Natural killer cell (primary cell): ENCODE measurements at regions of chr6 and their contacts with region 1.

Region 1: GRCh38 chr6:26156076-26156849 is 69.0 kb downstream of the HFE start:
- DNase-seq: peak; percentile 92 to 93
- ATAC-seq: peak; percentile 48 to 72 (median 58)
- H3K4me3 ChIP-seq: peak overlapping the region; percentile 65
- H3K4me3 Mint-ChIP-seq: peak overlapping the region; percentile 99
- H3K27ac ChIP-seq: peak overlapping the region; percentile 87
- H3K27ac Mint-ChIP-seq: peak overlapping the region; percentile 92 to 97
- H3K4me1 ChIP-seq: peaks cover 29% of the 10 kb centered on the region
- H3K4me1 Mint-ChIP-seq: peaks cover 56% of the 10 kb centered on the region in 2 donors
- H3K27me3 ChIP-seq: no peaks in the 10 kb centered on the region
- H3K27me3 Mint-ChIP-seq: no peaks in the 10 kb centered on the region
- CTCF ChIP-seq: no peak

Region 2: DNA sequence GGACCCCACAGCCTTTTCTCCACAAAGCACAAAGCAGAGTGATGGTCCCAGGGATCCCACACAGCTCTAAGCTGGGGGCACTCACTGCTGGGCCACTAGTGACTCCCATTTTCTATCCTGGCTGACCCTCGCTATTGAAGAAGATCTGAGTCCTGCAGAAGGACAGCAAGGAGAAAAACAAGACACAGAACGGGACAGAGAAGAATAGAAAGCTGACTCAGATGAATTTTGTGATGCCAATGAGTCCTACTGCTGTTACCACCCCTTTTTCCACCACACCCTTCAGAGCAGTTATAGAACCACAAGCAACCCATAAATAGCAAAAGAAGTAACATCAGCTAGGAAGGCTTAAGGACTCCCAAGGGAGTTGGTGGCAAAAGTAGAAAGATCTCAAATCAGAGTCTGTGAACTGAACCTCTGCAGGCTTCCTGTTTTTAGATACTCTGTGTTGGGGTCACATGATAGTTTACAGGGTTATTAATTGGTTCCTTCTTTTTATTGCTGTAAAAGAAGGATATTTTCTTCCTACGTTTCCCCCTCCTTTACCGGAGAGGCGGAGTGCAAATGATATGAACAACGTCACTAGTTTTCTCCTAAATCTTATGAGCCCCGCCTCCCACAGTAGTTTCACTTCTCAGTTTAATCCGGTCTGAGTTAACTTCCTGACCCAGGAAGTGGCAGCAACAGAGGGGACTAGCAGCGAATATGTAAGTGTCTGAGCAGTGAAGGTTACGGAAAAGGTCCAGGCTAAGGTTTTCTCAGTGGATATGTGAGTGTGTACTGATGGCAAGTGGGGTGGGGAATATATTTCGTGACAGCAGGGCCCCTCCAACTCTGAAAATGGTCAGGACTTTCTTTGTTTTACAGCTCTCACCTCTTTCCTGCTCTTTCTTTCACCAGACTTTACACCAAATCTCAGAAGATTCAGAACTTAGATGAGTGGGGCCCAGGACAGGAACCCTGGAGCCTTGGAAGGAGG is 193.8 kb before region 1 on chr6 and contains the start of gene TRIM38:
- intact Hi-C with region 1: no loop called
- DNase-seq: peak; percentile 48 to 93
- ATAC-seq: peak; percentile 94 to 95 (median 94)
- H3K4me3 ChIP-seq: peak within 1 kb of the TSS; percentile 88
- H3K4me3 Mint-ChIP-seq: peak within 1 kb of the TSS; percentile 98
- H3K27ac ChIP-seq: peak within 1 kb of the TSS; percentile 97
- H3K27ac Mint-ChIP-seq: peak within 1 kb of the TSS; percentile 96 to 99
- H3K4me1 ChIP-seq: peaks cover 52% of the 10 kb centered on the region
- H3K4me1 Mint-ChIP-seq: peaks cover 68 to 71% of the 10 kb centered on the region in 2 donors
- H3K27me3 ChIP-seq: no peaks in the 10 kb centered on the region
- H3K27me3 Mint-ChIP-seq: no peaks in the 10 kb centered on the region
- CTCF ChIP-seq: no peak
- total RNA-seq, gene TRIM38: 25.5 to 30.5 (median 27.1) TPM

Region 3: GRCh38 chr6:26054857-26055669 is 101.2 kb before region 1 on chr6:
- intact Hi-C with region 1: loop called (anchors 2 kb)
- DNase-seq: peak; percentile 83 to 92
- ATAC-seq: peak; percentile 71 to 82 (median 71)
- H3K4me3 ChIP-seq: peak overlapping the region; percentile 78
- H3K4me3 Mint-ChIP-seq: peak overlapping the region; percentile 96
- H3K27ac ChIP-seq: peak overlapping the region; percentile 92
- H3K27ac Mint-ChIP-seq: peak overlapping the region; percentile 98 to 99
- H3K4me1 ChIP-seq: peaks cover 19% of the 10 kb centered on the region
- H3K4me1 Mint-ChIP-seq: peaks cover 29 to 35% of the 10 kb centered on the region in 2 donors
- H3K27me3 ChIP-seq: no peaks in the 10 kb centered on the region
- H3K27me3 Mint-ChIP-seq: no peaks in the 10 kb centered on the region
- CTCF ChIP-seq: no peak

Region 4: DNA sequence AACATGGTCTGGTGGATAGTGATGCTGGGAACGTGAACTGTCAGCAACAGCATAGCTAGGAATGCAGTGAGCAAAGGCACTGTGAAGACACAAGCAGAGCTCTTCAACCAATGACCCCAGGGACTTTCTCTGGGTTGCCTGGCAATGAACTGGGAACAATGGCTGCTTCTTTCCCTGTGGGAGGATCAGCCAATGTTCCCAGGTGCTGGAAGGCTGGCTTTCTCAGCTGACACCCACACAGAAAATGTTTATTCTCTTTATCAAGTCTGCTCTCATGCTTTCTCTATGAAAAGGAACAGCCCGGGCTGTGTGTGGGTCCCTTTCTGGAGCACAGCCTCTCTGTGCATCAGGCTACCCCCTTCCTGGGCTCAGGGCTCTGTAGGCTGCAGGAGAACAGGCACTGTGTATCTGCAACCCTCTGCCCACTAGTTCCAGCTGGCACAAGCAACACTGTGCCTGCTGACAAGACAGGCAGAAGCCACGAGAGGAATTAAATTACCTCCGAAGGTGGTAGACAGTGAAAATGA is 14.8 kb before region 1 on chr6:
- intact Hi-C with region 1: no loop called
- DNase-seq: no peak
- ATAC-seq: no peak
- H3K4me3 ChIP-seq: no peak overlapping the region
- H3K4me3 Mint-ChIP-seq: no peak overlapping the region
- H3K27ac ChIP-seq: no peak overlapping the region
- H3K27ac Mint-ChIP-seq: no peak overlapping the region
- H3K4me1 ChIP-seq: no peaks in the 10 kb centered on the region
- H3K4me1 Mint-ChIP-seq: no peaks in the 10 kb centered on the region
- H3K27me3 ChIP-seq: no peaks in the 10 kb centered on the region
- H3K27me3 Mint-ChIP-seq: no peaks in the 10 kb centered on the region
- CTCF ChIP-seq: no peak

Region 5: GRCh38 chr6:26175428-26176181 is 19.3 kb after region 1 on chr6:
- intact Hi-C with region 1: loop called (anchors 1 kb)
- DNase-seq: peak in 1 of 2 donors; percentile 87
- ATAC-seq: no peak
- H3K4me3 ChIP-seq: no peak overlapping the region
- H3K4me3 Mint-ChIP-seq: peak overlapping the region; percentile 78
- H3K27ac ChIP-seq: peak overlapping the region; percentile 6
- H3K27ac Mint-ChIP-seq: peak overlapping the region; percentile 77 to 83
- H3K4me1 ChIP-seq: peaks cover 17% of the 10 kb centered on the region
- H3K4me1 Mint-ChIP-seq: peaks cover 37 to 39% of the 10 kb centered on the region in 2 donors
- H3K27me3 ChIP-seq: no peaks in the 10 kb centered on the region
- H3K27me3 Mint-ChIP-seq: no peaks in the 10 kb centered on the region
- CTCF ChIP-seq: peak; percentile 86

Region 6: GRCh38 chr6:26216356-26216885 is 60.2 kb after region 1 on chr6:
- intact Hi-C with region 1: loop called (anchors 1 kb)
- DNase-seq: peak; percentile 68 to 94
- ATAC-seq: peak; percentile 77 to 92 (median 79)
- H3K4me3 ChIP-seq: peak overlapping the region; percentile 63
- H3K4me3 Mint-ChIP-seq: no peak overlapping the region
- H3K27ac ChIP-seq: peak overlapping the region; percentile 91
- H3K27ac Mint-ChIP-seq: no peak overlapping the region
- H3K4me1 ChIP-seq: peaks cover 27% of the 10 kb centered on the region
- H3K4me1 Mint-ChIP-seq: no peaks in the 10 kb centered on the region
- H3K27me3 ChIP-seq: no peaks in the 10 kb centered on the region
- H3K27me3 Mint-ChIP-seq: no peaks in the 10 kb centered on the region
- CTCF ChIP-seq: no peak

Region 7: DNA sequence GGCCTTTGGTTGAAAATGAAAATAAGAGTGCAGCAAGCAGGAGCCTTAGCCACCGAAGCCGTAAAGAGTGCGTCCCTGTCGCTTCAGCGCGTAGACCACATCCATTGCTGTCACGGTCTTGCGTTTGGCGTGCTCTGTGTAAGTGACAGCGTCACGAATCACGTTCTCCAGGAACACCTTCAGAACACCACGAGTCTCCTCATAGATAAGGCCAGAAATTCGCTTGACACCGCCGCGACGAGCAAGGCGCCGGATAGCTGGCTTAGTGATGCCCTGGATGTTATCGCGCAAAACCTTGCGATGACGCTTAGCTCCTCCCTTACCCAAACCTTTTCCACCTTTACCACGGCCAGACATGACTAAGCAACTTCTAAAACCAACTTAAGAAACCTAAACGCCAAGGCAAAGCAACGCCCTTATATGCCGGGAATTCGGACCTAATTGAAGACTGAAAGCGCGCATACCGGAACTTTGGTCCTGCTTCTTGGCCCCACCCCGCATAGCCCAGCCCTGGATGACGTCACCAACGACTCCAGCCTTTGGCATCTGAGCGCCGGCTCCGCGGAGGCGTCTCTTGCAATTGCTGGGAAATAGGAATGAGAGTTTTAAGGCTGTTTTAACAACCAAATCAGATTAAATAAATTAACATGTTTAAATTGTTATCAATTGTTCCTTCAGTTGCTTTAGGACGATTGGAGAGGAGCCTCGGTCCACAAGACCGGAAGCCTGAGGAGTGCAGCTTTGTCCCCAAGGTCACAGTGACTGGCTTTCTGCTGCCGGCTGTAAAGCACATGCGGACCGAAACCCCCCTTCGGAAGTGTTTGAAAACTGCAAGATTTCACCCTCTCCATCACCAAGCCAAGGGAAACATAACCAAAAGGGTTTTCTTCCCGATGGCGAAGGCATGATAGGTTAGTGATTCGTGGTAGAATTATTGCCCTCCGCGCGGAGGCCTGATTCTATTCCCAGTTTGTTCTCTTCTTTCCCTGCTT is 129.2 kb after region 1 on chr6:
- intact Hi-C with region 1: loop called (anchors 1 kb)
- DNase-seq: peak; percentile 83 to 98
- ATAC-seq: peak; percentile 76 to 93 (median 83)
- H3K4me3 ChIP-seq: peak overlapping the region; percentile 70
- H3K4me3 Mint-ChIP-seq: peak overlapping the region; percentile 95
- H3K27ac ChIP-seq: peak overlapping the region; percentile 97
- H3K27ac Mint-ChIP-seq: peak overlapping the region; percentile 98
- H3K4me1 ChIP-seq: peaks cover 17% of the 10 kb centered on the region
- H3K4me1 Mint-ChIP-seq: peaks cover 34 to 37% of the 10 kb centered on the region in 2 donors
- H3K27me3 ChIP-seq: no peaks in the 10 kb centered on the region
- H3K27me3 Mint-ChIP-seq: peaks cover 3 to 8% of the 10 kb centered on the region in 2 donors
- CTCF ChIP-seq: no peak

Region 8: GRCh38 chr6:27838058-27838944 is 1682.0 kb after region 1 on chr6:
- intact Hi-C with region 1: loop called (anchors 10 kb)
- DNase-seq: peak; percentile 78 to 97
- ATAC-seq: peak; percentile 66 to 86 (median 79)
- H3K4me3 ChIP-seq: peak overlapping the region; percentile 82
- H3K4me3 Mint-ChIP-seq: no peak overlapping the region
- H3K27ac ChIP-seq: peak overlapping the region; percentile 98
- H3K27ac Mint-ChIP-seq: no peak overlapping the region
- H3K4me1 ChIP-seq: peaks cover 32% of the 10 kb centered on the region
- H3K4me1 Mint-ChIP-seq: peaks cover 6 to 7% of the 10 kb centered on the region in 2 donors
- H3K27me3 ChIP-seq: no peaks in the 10 kb centered on the region
- H3K27me3 Mint-ChIP-seq: no peaks in the 10 kb centered on the region
- CTCF ChIP-seq: no peak